Left ventricle myocardium inferior (tissue), 1 donor: ENCODE measurements at regions of chrX and their contacts with region 1.

Region 1: DNA sequence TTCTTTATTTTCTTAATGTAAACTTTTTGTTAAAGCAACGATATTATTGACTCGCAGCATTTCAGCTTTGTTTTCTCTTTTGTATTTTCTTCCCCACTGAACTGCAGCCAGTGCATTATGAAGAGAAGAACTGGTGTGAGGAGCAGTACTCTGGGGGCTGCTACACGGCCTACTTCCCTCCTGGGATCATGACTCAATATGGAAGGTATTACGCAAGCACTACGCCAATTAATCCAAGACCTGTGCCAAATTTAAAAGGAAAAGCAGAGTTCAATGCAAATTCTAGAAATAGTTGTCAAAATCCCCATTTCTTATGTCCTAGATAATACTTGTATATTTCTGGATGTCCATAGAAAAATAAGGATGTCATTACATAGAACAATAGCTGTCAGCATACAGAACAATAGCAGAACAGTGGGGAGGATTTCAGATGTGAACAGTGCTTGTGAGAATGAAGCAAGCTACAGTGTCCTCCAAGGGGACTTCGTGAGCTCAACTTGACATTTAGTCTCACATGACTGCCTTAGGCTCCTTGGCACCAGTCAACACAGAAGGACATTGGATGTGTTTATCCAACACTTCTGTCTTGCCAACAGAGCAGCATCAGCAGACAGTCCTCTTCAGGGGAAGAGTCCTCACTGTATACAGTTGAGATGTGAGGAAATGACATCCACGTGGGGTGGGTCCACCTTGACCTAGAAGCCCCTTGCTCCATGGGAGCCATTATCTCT is 85.9 kb downstream of the MAOA start:
- DNase-seq: no peak
- H3K4me3 ChIP-seq: no peak overlapping the region
- H3K27ac ChIP-seq: peak overlapping the region; percentile 73
- H3K4me1 ChIP-seq: peaks cover 31% of the 10 kb centered on the region
- H3K27me3 ChIP-seq: no peaks in the 10 kb centered on the region
- CTCF ChIP-seq: no peak

Region 2: DNA sequence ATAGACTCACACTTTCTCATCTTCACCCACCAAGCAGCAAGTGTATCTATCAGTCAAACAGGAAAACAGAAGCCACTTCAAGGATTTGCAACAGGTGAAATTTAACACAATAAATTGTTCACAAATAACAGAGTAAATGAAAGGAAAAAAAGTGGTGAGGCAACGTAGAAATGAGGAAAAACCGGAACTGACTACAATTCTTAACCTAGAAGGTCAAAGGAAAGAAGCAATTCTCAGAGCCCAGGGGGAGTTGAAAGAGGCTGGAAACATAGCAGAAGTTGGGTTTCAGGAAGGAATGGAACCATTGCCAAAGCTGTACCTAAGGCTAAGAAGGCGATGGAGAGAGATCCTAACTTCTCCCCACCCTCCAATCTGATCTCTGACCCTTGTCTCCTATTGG is 162.8 kb before region 1 on chrX:
- intact Hi-C with region 1: loop called (anchors 5 kb)
- DNase-seq: no peak
- H3K4me3 ChIP-seq: no peak overlapping the region
- H3K27ac ChIP-seq: no peak overlapping the region
- H3K4me1 ChIP-seq: no peaks in the 10 kb centered on the region
- H3K27me3 ChIP-seq: no peaks in the 10 kb centered on the region
- CTCF ChIP-seq: no peak